Head of caudate nucleus (tissue), 42 donors: ENCODE measurements at regions of chr6 and their contacts with region 1.

Region 1: DNA sequence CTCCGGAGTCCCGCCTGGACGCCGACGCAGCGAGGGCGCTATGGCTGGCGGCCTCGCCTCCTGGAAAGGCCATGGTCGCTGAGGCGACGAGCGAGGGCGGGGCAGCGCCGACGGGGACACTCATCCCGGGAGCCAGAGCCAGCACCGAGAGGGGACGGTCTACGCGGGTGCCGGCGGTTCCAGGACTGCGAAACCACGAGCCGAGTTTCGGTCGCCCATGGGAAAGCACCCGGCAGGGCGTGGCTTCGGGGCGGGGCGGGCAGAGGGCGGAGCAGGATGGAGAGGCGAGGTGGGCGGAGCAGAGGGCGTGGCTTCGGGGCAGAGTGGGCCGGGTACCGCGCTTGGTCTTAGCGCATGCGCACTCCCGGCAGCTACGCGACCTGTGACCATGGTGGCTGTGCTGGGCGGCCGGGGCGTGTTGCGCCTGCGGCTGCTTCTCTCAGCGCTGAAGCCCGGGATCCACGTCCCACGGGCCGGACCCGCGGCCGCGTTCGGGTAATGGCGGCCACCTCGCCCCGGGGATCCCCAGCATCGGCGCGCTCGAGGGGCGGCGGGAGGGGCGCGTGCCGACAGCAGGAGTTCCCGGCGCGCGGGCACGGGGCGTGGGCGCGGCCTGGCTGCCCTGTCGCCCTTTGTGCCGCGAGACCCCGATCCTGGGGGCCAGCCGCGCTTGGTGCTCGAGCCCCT is at the start of gene BPHL:
- DNase-seq: peak; percentile 93 to 100 (median 99)

Region 2: DNA sequence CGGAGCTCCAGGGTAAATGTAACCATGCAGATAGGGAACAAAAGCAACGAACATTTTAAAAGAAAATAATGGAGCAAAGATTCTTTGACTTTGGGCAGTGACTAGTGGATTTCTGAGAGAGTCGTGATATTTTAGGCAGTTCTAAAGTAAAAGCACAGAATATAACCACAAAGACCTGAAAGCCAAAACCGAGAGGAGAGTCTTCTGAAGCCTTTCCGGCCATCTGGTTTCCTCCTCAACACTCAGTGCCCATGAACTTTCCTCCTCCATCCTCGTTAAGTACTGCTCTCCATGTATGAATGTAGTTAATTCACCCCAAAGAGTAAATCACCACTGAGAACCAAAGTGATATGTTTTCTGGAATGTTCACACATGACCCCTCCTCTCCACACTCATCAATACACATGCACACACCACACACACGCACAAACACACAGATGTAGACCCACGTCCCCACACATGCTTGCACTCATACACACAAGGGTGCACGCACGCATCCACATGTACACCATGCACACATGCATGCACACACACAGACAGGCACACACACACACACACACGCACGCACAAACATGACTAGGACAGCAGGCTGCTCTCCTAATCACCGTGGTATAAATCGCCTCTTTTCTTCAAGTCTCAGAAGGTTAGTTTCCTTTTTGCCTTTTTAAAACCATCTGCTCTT is 477.3 kb before region 1 on chr6:
- intact Hi-C with region 1: no loop called
- DNase-seq: peak in 2 of 42 donors; percentile 3 to 18

Region 3: DNA sequence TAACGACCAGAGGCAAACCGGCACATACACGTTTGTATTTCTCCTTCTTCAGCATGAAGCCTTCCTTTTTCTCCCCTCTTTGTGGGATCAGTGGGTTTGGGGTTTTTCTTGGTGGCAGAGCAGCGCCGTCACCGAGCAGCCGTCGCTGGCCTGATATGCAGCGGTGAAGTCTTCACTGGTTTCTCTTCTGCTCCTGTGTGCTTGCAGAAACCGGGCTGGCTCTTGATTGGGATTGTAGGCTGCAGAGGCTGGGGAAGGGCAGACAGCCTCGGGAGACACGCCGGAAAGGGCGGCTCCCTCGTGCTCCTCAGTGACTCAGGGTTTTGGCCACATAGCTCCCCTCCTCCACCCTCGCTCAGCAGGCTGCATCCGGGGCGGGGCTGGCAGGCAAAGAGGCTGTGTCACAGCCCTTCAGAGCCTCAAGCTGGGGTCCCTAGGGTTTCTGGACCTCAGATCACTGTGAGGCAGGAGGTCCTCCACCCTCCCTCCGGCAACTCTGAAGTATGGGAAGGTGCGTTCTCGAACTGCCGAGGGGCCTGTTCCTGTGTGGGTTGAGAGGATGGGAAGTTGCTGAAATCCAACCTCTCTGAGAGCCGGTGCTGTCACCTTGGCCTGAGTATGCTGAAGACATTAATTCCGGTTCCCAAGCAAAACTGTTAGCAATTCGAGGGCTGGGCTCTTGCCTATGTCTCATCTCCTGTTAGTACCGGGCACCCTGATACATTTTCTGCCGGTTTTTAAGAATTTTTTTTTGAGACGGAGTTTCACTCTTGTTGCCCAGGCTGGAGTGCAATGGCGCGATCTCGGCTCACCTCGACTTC is 94.6 kb before region 1 on chr6:
- intact Hi-C with region 1: no loop called
- DNase-seq: peak; percentile 20 to 80 (median 61)

Region 4: DNA sequence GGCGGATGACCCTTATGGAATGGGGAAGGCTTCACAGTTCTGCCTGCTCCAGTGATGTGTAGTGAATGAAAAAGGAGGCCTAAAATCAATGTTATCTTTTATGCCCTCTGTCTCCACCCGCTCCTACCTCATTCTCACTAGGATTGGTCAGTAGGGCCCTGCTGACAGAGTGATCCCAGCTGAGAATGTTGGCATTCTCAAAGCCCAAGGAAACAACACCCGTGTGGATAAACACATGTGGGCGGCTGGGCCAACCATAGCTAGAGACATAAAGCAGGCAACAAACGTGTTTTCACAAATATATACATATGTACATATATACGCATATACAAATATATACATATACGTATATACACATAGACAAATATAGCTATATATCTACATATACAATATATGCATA is 45.7 kb before region 1 on chr6:
- intact Hi-C with region 1: loop called (anchors 5 kb)
- DNase-seq: no peak